ENCODE measurements at regions of chr9 and their contacts with region 1.

Region 1: DNA sequence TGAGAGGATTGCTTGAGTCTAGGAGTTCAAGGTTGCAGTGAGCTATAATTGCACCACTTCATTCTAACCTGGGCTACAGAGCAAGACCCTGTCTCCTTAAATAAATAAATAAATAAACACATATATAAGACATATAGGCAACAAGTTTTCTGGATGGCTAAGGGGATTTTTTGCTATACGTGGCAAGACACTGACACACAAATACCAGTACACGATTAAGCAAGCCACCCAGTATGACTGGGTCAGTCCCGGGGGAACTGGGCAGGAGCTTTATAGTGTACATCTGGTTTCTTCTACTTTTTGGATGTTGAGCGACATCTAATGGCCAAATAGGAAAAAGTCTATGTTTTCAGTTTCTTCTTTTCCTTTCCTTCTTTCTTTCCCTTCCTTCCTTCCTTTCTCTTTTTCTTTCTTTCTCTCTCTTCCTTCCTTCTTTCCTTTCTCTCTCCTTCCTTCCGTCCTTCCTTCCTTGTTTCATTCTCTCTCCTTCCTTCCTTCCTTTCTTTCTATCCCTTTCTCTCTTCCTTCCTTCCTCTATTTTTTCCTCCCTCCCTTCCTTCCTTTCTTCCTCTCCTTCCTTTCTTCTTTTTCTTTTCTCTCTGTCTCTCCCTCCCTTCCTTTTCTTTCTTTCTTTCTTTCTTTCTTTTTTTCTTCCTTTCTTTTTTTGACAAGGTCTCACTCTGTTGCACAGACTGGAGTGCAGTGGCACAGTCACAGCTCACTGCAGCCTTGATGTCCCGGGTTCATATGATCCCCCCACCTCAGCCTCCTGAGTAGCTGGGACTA is 47.0 kb upstream of the PLIN2 start:
- DNase-seq: peak; percentile 77
- H3K4me3 Mint-ChIP-seq: no peak overlapping the region
- H3K27ac Mint-ChIP-seq: no peak overlapping the region
- H3K4me1 Mint-ChIP-seq: peaks cover 22% of the 10 kb centered on the region
- H3K27me3 Mint-ChIP-seq: no peaks in the 10 kb centered on the region

Region 2: DNA sequence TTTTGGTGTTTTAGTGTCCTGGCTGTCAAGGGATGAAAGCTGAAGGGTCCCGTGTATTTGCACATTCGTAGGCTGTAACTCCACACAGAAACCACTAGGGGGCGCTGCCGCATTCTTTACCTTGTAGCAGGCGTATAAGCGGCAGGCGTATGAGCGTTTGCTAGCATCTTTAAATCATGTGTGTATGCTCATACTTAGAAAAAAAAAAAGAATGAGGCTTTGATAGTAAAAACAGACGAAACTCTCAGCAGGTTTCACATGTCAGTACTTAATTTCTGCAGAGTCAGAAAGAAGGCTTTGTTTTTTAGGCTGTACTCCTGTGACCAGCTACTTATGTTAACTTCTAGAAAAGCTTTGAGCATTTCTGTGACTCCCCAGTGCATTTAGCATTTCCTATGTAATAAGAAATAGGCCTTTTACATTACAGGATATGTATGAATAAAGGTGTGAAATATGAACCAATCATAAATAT is 919.1 kb before region 1 on chr9:
- CTCF ChIA-PET with region 1: interaction called, 5 read pairs
- intact Hi-C with region 1: loop called (anchors 1 kb)
- DNase-seq: peak; percentile 86
- H3K4me3 Mint-ChIP-seq: no peak overlapping the region
- H3K27ac Mint-ChIP-seq: no peak overlapping the region
- H3K4me1 Mint-ChIP-seq: peaks cover 2% of the 10 kb centered on the region
- H3K27me3 Mint-ChIP-seq: peaks cover 3% of the 10 kb centered on the region

Region 3: DNA sequence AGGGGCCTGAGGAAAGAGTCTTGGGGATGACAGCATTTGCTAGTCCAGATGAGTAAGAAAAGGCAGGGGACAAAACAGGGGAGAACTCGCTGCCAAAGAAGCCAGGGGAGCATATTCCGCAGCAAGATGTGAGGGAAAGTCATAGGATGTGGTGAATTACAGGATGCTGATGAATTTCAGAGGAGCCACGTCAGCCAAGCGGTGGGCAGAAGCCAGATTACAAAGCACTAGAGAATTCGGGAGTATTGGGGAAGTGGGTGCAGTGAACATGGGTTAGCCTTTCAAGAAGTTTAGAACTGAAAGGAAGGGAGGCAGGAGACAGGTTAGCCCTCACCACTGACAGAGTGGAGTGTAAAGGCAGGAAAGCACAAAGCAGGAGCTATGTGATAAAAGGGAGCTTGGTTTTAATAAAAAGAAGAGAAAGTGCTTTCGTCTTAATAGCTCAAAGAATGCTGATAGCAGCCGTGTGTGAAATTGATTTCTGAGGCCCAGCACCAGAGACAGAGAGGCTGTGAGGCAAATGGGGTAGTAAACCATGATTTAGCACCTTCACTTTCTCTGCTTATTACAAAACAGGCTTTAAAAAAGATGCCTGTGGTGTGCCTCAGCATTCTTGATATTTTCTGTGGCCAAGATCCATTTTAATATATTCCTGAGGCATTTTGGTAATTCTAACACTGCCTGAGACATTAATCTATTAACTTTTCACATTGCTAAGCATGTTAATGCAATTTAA is 683.5 kb before region 1 on chr9:
- CTCF ChIA-PET with region 1: no interaction called
- intact Hi-C with region 1: no loop called
- DNase-seq: no peak
- H3K4me3 Mint-ChIP-seq: no peak overlapping the region
- H3K27ac Mint-ChIP-seq: no peak overlapping the region
- H3K4me1 Mint-ChIP-seq: no peaks in the 10 kb centered on the region
- H3K27me3 Mint-ChIP-seq: no peaks in the 10 kb centered on the region

Region 4: DNA sequence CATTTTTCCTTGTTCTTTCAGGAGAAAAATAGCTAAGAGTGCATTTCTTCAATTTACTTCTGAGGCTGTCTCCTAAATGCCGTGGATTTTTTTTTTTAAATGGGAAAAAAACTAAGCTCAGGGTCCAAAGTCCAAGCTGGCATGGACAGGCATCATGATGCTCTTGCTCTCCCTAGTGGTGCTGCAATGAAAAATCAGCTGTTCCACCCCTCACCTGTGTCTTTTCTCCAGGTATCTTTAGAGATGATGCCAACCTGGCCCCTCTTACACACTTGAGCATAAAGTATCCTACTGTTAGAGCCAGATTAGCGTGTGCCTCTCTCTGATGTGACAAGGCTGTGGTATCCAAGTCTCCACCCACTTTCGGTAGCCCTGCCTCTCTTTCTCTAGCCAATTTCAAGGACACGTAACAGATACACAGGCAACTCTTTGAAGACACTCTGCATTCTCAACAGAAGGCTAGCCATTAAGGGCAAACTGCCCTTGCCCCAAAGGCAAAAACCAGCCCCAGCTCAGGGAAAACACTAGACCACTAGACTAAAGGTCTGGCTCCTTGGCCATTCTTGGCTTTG is 350.1 kb before region 1 on chr9:
- CTCF ChIA-PET with region 1: no interaction called
- intact Hi-C with region 1: loop called (anchors 10 kb)
- DNase-seq: no peak
- H3K4me3 Mint-ChIP-seq: no peak overlapping the region
- H3K27ac Mint-ChIP-seq: no peak overlapping the region
- H3K4me1 Mint-ChIP-seq: peaks cover 16% of the 10 kb centered on the region
- H3K27me3 Mint-ChIP-seq: peaks cover 2% of the 10 kb centered on the region

Region 5: DNA sequence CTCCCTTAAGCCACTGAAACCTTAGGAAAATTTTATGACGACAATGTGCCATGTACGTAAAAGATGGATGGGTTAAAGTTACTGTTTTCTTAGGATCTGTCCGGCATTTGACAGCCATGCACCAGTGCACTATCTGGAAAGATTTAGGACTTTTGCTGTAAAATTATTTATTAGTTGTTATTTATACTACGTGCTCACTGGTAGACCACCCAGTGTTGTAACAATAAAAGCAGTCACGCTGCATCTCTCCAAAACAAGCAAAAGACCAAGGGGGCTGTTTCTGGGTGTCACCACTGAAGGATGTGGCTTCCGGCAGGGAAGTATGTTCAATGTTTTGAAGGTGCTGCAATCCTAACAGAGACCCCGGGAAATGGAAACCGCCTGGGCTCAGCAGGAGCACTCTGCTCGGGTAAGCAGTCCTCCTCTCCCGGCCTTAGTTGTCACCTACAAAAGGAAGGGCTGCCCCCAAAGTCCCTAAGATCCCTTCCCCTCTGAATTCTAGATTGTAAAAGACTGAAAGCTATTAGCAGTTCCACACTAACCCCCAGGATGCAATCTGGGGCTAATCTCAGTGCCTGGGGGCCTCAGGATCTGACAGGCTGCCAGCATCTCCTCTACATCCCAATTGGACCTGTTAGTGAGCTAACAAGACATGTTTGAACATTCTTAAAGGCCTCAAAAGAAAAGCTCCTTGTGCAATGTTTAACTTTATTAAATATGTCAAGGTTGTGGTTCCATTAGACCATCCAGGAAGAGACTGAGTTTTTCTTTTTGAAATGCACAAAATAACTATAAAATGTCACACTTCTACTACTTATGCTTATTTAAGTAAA is 179.8 kb before region 1 on chr9:
- CTCF ChIA-PET with region 1: no interaction called
- intact Hi-C with region 1: no loop called
- DNase-seq: no peak
- H3K4me3 Mint-ChIP-seq: no peak overlapping the region
- H3K27ac Mint-ChIP-seq: no peak overlapping the region
- H3K4me1 Mint-ChIP-seq: no peaks in the 10 kb centered on the region
- H3K27me3 Mint-ChIP-seq: no peaks in the 10 kb centered on the region

Region 6: DNA sequence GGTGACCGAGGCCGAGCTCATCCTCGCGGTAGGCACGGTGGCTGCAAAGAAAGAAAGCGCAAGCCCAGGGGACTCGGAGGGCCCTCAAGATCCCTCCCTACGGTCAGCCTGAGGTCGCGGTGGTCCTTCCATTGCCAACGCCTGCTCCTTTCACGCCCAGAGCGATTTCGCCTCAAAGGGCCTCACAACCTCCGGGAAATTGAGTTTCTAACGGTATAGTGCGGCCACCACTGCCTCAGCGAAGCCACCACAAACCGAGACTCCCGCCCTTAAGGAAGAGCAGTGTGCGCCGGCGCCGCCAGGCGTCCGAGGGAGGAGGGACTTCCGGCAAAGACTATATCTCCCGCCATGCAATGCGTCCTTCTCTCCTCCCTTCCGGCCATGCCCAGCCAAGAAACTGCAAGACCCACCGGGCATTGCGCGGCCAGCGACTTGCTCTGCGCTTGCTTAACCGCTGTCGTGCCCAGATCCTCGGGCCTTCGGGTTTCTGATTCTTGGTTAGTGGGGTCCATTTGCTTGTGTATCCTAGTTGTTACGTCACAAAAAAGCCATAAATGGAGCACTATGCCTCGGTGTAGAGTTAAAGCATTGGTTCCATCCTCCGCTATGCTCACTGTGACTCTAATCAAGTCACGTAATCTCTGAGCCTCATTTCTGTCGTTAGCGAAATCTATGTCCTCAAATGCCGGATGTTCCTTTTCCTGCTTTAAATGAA is 71.5 kb before region 1 on chr9 and contains the start of gene HAUS6:
- CTCF ChIA-PET with region 1: interaction called, 8 read pairs
- intact Hi-C with region 1: loop called (anchors 1 kb)
- DNase-seq: peak; percentile 97
- H3K4me3 Mint-ChIP-seq: peak within 1 kb of the TSS; percentile 94
- H3K27ac Mint-ChIP-seq: peak within 1 kb of the TSS; percentile 93
- H3K4me1 Mint-ChIP-seq: peaks cover 22% of the 10 kb centered on the region
- H3K27me3 Mint-ChIP-seq: no peaks in the 10 kb centered on the region
- total RNA-seq, gene HAUS6: 23.6 to 24.1 TPM

Region 7: DNA sequence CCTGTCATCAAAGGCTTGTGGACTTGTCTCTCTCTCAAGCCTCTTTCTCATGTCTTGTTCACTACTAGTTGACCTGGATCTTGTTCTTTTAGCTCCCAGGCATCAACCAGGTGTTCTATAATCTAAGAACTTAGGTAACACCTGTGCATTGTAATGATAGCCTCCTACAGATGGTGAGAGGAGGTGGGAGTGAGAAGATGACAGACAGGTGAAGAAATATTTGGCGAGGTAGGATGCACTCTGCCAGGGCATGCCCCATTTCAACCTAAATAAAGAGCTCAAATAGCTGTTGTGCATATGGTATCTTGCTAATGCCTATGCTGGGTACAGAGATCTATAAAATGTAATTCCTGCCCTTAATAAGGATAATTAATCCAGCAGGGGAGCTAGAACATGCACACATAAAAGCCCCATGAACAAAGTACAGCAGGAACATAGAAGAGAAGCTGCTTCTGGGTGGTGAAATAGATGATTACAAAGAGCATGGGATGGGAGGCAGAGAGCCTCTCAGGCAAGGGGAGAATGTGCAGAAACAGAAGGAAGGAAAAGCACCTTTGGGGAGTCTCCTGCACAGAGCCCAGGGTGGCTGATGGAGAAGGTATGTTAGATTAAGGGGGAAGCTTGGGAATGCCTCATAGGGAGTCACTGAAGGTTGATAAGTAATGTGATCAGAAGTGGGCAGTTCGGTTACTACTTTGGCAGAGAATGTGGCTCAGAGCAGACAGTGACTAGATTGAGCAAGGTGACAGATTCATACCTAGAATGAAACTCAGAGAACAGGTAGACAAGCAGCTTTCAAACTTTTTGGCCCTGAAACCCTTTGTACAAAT is 19.0 kb before region 1 on chr9:
- CTCF ChIA-PET with region 1: interaction called, 13 read pairs
- intact Hi-C with region 1: no loop called
- DNase-seq: peak; percentile 26
- H3K4me3 Mint-ChIP-seq: no peak overlapping the region
- H3K27ac Mint-ChIP-seq: no peak overlapping the region
- H3K4me1 Mint-ChIP-seq: peaks cover 31% of the 10 kb centered on the region
- H3K27me3 Mint-ChIP-seq: no peaks in the 10 kb centered on the region

Region 8: DNA sequence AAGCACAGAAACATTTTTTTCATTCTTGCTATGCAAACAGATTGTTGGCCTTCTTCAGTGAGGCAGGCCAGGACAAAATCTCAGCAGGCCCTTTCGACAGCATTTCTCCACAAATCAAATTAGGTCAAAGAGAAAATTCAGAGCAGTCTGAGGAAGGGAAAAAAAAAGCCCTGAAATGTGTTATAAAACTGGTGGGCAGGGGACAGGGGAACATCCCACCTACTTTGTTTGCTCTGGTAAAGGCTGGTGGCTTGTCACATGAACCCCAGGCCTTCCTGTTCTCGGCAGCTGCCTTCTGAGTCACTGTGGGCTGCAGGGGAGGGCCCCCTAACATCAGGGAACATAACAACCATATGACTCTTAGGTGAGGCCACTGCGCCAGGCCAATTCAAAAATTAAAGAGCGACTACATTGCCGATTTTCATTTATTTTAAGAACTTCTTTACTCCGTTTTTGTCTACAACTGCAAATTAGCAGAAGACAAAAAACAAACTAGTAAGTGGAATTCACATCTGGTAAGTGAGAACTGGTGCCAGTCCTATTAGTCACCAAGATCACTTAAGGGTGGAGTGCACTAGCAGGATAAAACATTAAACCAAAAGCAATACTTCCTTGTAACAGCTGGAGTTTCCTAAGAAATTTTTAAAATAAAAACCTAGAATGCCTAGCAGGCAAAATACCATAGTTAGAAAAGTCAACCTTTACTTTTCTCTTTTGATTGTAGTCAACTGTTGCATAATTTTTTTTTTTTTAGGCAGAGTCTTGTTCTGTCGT is 10.0 kb after region 1 on chr9:
- CTCF ChIA-PET with region 1: interaction called, 23 read pairs
- intact Hi-C with region 1: loop called (anchors 1 kb)
- DNase-seq: peak; percentile 92
- H3K4me3 Mint-ChIP-seq: peak overlapping the region; percentile 47
- H3K27ac Mint-ChIP-seq: peak overlapping the region; percentile 89
- H3K4me1 Mint-ChIP-seq: peaks cover 14% of the 10 kb centered on the region
- H3K27me3 Mint-ChIP-seq: no peaks in the 10 kb centered on the region

Region 9: DNA sequence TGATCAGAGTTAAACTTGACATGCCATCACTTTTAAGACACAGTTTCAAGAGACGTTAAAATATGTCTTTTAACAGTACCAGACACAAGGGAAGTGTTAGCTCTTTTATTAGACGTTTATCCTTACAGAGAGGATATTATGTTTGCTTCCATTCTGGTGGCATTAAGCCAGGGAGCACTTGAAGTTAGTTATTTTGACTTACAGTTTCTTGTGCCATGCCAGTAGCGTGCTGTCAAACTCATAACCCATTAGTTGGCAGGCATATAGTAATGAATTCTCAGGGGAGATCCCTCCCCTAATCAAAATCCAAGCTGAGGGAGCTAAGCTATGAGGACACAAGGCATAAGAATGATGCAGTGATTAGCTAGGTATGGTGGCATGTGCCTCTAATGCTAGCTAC is 139.3 kb after region 1 on chr9:
- CTCF ChIA-PET with region 1: no interaction called
- intact Hi-C with region 1: no loop called
- DNase-seq: no peak
- H3K4me3 Mint-ChIP-seq: no peak overlapping the region
- H3K27ac Mint-ChIP-seq: no peak overlapping the region
- H3K4me1 Mint-ChIP-seq: no peaks in the 10 kb centered on the region
- H3K27me3 Mint-ChIP-seq: no peaks in the 10 kb centered on the region